Uterus (tissue), 4 donors: ENCODE measurements at regions of chr7 and their contacts with region 1.

Region 1: DNA sequence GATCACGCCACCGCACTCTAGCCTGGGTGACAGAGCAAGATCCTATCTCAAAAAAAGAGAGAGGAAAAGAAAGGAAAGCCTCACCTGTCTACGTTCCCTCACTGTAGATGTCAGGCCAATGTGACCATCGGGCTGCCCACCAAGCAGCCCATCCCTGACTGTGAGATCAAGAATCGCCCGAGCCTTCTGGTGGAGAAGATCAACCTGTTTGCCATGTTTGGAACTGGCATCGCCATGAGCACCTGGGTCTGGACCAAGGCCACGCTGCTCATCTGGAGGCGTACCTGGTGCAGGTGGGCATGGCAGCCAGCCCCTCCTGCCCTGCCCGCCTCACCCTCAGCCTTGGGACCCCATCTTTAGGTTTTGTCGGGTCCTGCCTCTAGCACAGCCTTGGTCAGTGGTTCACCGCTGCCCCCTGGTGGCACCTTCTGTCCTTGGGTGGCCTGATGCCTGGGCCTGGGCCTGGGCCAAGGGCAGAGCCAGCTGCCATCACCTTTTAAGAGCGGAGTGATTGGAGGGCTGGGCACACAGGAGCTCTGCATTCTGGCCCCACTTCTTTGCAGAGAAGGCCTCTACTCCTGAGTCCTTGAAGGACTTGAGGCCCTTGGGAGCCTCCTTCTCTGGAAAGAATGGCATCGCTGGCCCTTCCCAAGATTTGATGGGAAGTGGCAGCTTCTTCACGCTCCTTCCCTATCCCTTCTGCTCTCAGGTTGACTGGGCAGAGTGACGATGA is 14.4 kb upstream of the AHCYL2 start:
- DNase-seq: peak; percentile 74 to 77
- H3K4me3 ChIP-seq: no peak overlapping the region
- H3K27ac ChIP-seq: no peak overlapping the region
- H3K4me1 ChIP-seq: no peaks in the 10 kb centered on the region
- H3K27me3 ChIP-seq: no peaks in the 10 kb centered on the region
- CTCF ChIP-seq: peak; percentile 78 to 83 (median 80)
- POLR2A ChIP-seq: no peak

Region 2: DNA sequence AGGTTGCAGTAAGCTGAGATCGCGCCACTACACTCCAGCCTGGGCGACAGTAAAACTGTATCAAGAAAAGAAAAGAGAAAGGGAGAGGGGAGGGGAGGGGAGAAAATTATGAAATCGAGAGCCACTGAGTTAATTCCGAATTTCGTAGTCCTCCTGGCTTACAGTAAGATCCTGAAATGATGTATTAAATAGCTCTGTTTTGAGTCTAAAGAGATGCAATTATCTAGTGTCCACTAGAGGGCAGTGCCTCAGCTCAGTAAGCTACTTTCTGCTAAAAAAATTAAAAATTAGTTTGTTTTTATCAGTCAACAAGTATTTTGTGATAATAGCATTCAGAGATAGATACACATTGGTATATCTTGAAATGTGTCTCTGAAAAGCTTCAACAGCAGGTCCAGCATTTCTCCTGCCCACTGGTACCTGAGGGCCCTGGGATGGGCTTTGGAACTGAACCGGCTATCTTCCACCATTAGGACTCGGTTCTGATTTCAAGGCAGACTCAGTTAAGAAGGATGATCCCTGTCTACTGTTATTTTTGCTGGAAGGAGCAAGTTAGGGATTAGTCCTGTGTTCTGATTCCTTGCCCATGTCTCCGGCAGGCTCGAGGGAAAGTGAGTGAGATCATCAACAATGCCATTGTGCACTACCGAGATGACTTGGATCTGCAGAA is 46.4 kb before region 1 on chr7:
- intact Hi-C with region 1: loop called (anchors 5 kb)
- DNase-seq: no peak
- H3K4me3 ChIP-seq: no peak overlapping the region
- H3K27ac ChIP-seq: no peak overlapping the region
- H3K4me1 ChIP-seq: peaks cover 0 to 4% of the 10 kb centered on the region in 2 donors
- H3K27me3 ChIP-seq: no peaks in the 10 kb centered on the region
- CTCF ChIP-seq: peak; percentile 67 to 83 (median 70)
- POLR2A ChIP-seq: no peak